IMR-90 (cell line): ENCODE measurements at regions of chr6 and their contacts with region 1.

Region 1: DNA sequence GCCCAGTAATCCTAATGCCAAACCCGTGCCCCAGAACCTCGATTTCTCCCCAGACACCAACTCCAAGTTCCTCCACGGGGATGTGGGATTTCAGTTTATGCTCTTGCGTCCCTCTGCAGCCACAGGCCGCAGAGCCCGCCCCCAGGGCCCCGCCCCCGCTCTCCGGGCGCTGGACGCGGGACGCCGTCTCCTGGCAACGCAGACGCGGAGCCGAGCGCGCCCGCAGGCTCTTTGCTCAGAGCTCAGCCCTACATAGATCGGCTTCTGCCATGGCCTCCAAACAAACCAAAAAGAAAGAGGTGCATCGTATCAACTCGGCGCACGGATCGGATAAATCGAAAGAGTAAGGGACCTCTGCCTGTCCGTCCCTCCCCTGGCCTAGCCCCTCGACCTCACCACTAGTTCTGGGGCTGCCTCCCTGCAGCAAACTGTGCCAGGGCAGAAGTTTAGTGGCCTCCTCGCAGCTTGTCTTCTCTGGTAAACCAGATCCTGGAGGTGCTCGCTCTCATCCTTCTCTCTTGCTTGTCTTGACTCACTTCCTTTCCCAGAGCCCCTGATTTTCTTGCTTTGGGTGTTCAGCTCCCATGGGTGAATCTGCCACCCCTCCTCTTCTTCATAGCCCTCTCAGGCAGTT is at the start of gene ADGB:
- DNase-seq: peak; percentile 35
- ATAC-seq: peak; percentile 100
- H3K4me3 ChIP-seq: peak within 1 kb of the TSS; percentile 45
- H3K27ac ChIP-seq: no peak within 1 kb of the TSS
- H3K4me1 ChIP-seq: no peaks in the 10 kb centered on the region
- H3K27me3 ChIP-seq: 0 out of 2 replicates have a peak, but pooled peaks cover 1% of the 10 kb centered on the region
- CTCF ChIP-seq: no peak
- POLR2A ChIP-seq: no peak
- RAD21 ChIP-seq: no peak
- total RNA-seq, gene ADGB: not detected in 2 replicates

Region 2: DNA sequence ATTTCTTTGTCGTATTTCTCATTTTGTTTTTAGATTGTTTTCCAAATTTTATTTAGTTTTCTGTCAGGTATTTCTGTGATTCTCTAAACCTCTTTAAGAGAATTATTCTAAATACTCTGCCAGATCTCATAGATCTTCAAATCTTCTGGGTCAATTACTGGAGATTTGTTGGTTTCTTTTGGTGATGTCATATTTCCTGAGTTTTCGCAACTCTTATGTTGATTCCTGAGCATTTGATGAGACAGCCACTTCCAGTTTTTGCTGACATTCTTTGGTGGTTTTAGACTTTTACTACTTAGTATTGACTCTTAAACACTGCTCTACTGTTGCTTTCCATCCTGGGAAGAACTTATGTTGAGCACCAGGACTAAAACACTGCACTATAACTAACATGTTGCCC is 21.8 kb after region 1 on chr6:
- CTCF ChIA-PET with region 1: no interaction called
- POLR2A ChIA-PET with region 1: interaction called, 16 read pairs
- dilution Hi-C with region 1: no loop called
- in situ Hi-C with region 1: no loop called
- intact Hi-C with region 1: no loop called
- DNase-seq: no peak
- ATAC-seq: no peak
- H3K4me3 ChIP-seq: no peak overlapping the region
- H3K27ac ChIP-seq: no peak overlapping the region
- H3K4me1 ChIP-seq: no peaks in the 10 kb centered on the region
- H3K27me3 ChIP-seq: no peaks in the 10 kb centered on the region
- CTCF ChIP-seq: no peak
- POLR2A ChIP-seq: no peak
- RAD21 ChIP-seq: no peak

Region 3: GRCh38 chr6:147077251-147077650 is 478.4 kb after region 1 on chr6:
- CTCF ChIA-PET with region 1: no interaction called
- POLR2A ChIA-PET with region 1: no interaction called
- dilution Hi-C with region 1: no loop called
- in situ Hi-C with region 1: no loop called
- intact Hi-C with region 1: no loop called
- DNase-seq: no peak
- ATAC-seq: no peak
- H3K4me3 ChIP-seq: no peak overlapping the region
- H3K27ac ChIP-seq: no peak overlapping the region
- H3K4me1 ChIP-seq: no peaks in the 10 kb centered on the region
- H3K27me3 ChIP-seq: no peaks in the 10 kb centered on the region
- CTCF ChIP-seq: no peak
- POLR2A ChIP-seq: no peak
- RAD21 ChIP-seq: no peak